Motor neuron (in vitro differentiated cells): ENCODE measurements at regions of chr5 and their contacts with region 1.

Region 1: GRCh38 chr5:10283927-10284635 is 23.6 kb downstream of the CMBL start:
- ATAC-seq: peak; percentile 46 to 100 (median 99)
- H3K4me3 ChIP-seq: no peak overlapping the region
- H3K27ac ChIP-seq: no peak overlapping the region
- H3K4me1 ChIP-seq: peaks cover 3 to 4% of the 10 kb centered on the region in 2 donors

Region 2: DNA sequence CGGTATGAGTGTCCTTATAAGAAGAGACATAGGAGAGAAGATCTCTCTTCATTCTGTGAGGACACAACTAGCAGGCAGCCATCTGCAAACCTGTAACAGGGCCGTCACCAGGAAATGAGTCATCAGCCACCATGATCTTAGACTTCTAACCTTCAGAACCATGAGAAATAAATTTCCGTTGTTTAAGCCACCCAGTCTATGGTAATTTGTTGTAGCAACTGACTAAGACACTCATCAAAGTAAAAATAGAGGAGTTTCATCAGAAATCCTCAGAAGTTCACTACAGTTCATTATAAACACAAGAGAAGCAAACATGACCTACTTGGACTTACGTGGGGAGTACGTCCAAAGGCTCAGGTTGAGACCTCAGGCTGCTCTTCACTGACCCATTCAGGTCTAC is 1096.0 kb before region 1 on chr5:
- in situ Hi-C with region 1: no loop called
- ATAC-seq: peak in 4 of 8 experiments; percentile 43 to 99 (median 89)
- H3K4me3 ChIP-seq: no peak overlapping the region
- H3K27ac ChIP-seq: no peak overlapping the region
- H3K4me1 ChIP-seq: peaks cover 0 to 5% of the 10 kb centered on the region in 2 donors

Region 3: DNA sequence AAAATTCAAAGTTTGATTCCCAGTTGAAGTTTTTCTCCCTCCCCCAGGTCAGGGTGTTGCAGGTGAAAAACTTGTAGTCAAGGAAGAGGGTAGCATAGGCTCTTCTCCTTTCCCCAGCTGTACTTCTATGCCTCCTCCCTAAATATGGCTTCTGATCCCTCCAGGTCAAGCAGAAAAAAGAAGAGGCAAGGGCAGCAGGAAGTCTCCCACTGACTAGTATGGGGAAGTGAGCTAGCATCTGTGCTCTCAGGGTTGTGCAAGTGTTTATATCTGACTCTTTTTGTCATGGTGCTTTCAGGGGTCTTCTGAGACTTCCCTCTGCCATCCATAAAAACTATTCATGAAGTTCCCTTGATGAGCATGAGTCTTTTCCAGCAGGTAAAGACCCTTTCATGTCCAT is 110.4 kb before region 1 on chr5:
- in situ Hi-C with region 1: no loop called
- ATAC-seq: no peak
- H3K4me3 ChIP-seq: no peak overlapping the region
- H3K27ac ChIP-seq: no peak overlapping the region
- H3K4me1 ChIP-seq: no peaks in the 10 kb centered on the region

Region 4: DNA sequence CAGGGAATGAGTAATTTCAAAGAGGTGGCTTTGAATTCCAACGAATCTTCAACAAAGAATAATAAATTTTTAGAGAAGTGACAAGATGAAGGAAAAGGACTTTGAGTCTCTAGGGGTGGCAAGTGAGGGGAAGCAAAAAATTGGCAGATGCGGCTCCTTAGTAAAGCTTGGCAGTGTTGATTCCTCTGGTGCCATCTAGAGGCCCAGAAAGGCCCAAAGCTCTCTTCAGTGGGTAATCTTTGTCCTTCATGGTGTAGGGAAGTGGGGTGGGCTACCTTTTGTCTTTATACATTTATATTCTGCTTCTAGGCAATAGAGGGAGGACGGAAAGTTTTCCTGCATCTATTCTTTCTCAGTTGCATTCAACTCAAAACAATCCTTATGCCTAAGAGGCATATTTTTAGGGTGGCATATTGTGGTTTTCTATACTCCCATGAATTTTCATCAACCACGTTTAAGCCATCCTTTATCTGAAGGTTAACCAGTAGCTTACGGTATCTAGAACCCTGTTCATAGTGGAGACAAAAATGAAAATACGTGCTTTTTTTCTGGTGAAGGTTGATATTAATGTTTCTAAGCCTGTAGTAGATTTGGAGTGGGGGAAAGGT is 140.1 kb after region 1 on chr5:
- in situ Hi-C with region 1: loop called in 4 of 9 experiments (anchors 25 kb)
- ATAC-seq: peak in 5 of 8 experiments; percentile 46 to 73 (median 72)
- H3K4me3 ChIP-seq: no peak overlapping the region
- H3K27ac ChIP-seq: no peak overlapping the region
- H3K4me1 ChIP-seq: no peaks in the 10 kb centered on the region

Region 5: GRCh38 chr5:10635257-10635866 is 351.3 kb after region 1 on chr5:
- in situ Hi-C with region 1: loop called in 1 of 9 experiments (anchors 25 kb)
- ATAC-seq: peak in 3 of 8 experiments; percentile 22 to 57 (median 25)
- H3K4me3 ChIP-seq: no peak overlapping the region
- H3K27ac ChIP-seq: no peak overlapping the region
- H3K4me1 ChIP-seq: peaks cover 0 to 6% of the 10 kb centered on the region in 2 donors

Region 6: GRCh38 chr5:11148810-11149537 is 864.9 kb after region 1 on chr5:
- in situ Hi-C with region 1: no loop called
- ATAC-seq: peak in 6 of 8 experiments; percentile 65 to 87 (median 78)
- H3K4me3 ChIP-seq: no peak overlapping the region
- H3K27ac ChIP-seq: no peak overlapping the region
- H3K4me1 ChIP-seq: peaks cover 9 to 29% of the 10 kb centered on the region in 2 donors